HCT116 (cell line): ENCODE measurements at regions of chr17 and their contacts with region 1.

Region 1: DNA sequence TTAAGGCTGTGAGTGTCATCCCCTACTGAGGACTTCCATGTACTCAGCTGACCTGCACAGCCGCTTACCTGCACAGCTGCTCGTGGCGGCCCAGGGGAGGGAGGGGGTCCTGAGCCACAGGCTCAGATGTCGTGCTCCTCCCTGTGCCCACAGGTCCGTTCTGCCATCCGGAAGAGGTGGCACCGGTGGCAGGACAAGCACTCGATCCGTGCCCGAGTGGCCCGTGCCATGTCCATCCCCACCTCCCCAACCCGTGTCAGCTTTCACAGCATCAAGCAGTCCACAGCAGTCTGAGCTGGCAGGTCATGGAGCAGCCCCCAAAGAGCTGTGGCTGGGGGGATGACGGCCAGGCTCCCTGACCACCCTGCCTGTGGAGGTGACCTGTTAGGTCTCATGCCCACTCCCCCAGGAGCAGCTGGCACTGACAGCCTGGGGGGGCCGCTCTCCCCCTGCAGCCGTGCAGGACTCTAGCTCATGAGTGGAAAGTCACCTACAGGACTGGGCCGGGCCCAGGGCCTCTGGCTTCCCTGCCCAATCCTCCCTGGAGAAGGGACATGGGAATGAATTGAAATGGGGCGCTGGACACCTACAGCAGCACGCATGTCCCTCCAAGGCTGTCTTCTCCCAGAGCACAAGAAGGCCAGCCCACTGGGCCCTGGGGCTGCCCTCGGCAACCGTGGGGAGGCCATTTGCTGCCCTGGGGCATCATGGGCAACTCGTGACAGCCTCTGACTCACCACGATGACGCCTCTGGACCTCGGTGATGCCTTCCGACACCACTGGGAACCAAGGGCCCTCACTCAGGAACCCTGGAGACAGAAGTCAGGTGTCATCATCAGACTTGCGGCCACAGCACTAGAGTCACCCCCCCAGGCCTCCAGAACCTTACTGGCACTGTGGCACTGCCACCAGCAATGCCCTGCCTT is 9.9 kb upstream of the SPPL2C start:
- DNase-seq: no peak
- ATAC-seq: peak; percentile 25; the same call in 1 of the 2 replicates
- H3K4me3 ChIP-seq: no peak overlapping the region
- H3K27ac ChIP-seq: no peak overlapping the region
- H3K4me1 ChIP-seq: peaks cover 0 to 7% of the 10 kb centered on the region in 2 experiments; a peak in 2 of 4 replicates
- H3K27me3 ChIP-seq: no peaks in the 10 kb centered on the region; the same call in 1 of the 2 replicates
- CTCF ChIP-seq: no peak
- POLR2A ChIP-seq: no peak
- RAD21 ChIP-seq: no peak

Region 2: GRCh38 chr17:45640141-45640850 is 194.4 kb before region 1 on chr17:
- CTCF ChIA-PET with region 1: interaction called, 163 read pairs
- POLR2A ChIA-PET with region 1: interaction called, 8 read pairs
- RAD21 ChIA-PET with region 1: interaction called, 10 to 12 read pairs
- intact Hi-C with region 1: loop called (anchors 1 kb)
- DNase-seq: peak; percentile 78
- ATAC-seq: peak; percentile 97
- H3K4me3 ChIP-seq: no peak overlapping the region
- H3K27ac ChIP-seq: no peak overlapping the region
- H3K4me1 ChIP-seq: no peaks in the 10 kb centered on the region
- H3K27me3 ChIP-seq: no peaks in the 10 kb centered on the region
- CTCF ChIP-seq: peak; percentile 95 to 100 (median 100)
- POLR2A ChIP-seq: no peak
- RAD21 ChIP-seq: peak; percentile 99

Region 3: DNA sequence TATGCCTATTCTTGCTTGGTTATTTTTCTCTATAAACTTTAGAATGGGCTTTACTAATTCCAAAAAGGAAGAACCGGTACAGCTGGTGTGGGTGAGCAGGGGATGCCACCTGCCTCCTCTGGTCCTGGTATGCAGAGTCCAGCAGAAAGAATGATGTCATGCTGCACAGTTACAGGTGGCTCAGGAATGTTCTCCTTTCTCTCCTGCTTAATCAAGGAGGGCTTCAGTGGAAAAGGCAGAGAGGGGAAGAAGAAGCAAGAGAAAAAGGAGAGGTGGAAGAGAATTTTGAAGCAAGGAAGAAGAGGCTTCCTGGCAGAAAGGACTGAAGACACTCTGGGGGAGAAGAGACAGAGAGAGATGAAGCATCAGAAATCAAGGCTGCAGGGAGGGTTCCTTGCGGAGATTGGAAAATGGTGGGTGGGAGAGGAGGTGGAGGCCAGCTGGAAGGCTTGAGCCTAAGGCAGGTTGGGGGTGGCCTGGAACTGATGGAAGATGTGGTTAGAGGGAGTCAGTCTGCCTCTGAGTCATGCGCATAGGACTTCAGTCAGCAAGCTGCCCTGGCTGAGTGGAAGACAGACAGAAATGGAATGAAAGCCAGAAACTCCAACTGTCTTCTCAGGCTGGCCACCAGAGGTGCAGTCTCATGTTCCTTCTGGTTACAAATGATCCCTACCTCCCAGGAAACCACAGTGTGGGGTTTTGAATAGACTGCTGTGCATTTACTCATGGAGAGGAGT is 115.2 kb before region 1 on chr17:
- CTCF ChIA-PET with region 1: interaction called, 15 read pairs
- POLR2A ChIA-PET with region 1: interaction called, 3 read pairs
- RAD21 ChIA-PET with region 1: interaction called in 1 of 2 experiments, 3 read pairs
- intact Hi-C with region 1: loop called (anchors 5 kb)
- DNase-seq: peak; percentile 64
- ATAC-seq: peak; percentile 96
- H3K4me3 ChIP-seq: no peak overlapping the region
- H3K27ac ChIP-seq: no peak overlapping the region
- H3K4me1 ChIP-seq: peaks cover 10 to 11% of the 10 kb centered on the region in 2 experiments
- H3K27me3 ChIP-seq: no peaks in the 10 kb centered on the region
- CTCF ChIP-seq: peak; percentile 32 to 78 (median 73); a peak in 5 of 6 replicates
- POLR2A ChIP-seq: no peak
- RAD21 ChIP-seq: peak; percentile 54

Region 4: GRCh38 chr17:45759761-45760160 is 75.0 kb before region 1 on chr17:
- CTCF ChIA-PET with region 1: no interaction called
- POLR2A ChIA-PET with region 1: no interaction called
- RAD21 ChIA-PET with region 1: no interaction called
- intact Hi-C with region 1: no loop called
- DNase-seq: peak; percentile 52
- ATAC-seq: peak; percentile 92
- H3K4me3 ChIP-seq: no peak overlapping the region
- H3K27ac ChIP-seq: no peak overlapping the region
- H3K4me1 ChIP-seq: no peaks in the 10 kb centered on the region
- H3K27me3 ChIP-seq: peaks cover 4% of the 10 kb centered on the region; the same call in 1 of the 2 replicates
- CTCF ChIP-seq: no peak
- POLR2A ChIP-seq: no peak
- RAD21 ChIP-seq: no peak

Region 5: DNA sequence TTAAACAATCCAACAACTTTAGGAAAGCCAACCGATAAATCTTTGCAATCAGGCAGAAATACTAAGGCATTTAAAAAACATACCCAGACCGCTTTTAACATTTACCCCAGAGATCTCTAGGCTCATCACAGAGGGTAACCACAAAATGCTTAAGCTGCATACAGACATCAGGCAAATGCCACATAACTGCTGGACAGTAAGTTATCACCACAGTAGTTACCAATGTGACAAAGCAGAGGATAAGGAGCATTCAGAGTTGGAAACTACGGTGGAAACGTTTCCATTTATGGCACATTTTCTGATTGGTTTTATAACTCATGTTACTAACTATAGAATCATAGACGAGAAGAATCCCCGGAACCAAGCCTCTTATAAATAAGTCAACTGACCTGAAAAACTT is 281.0 kb after region 1 on chr17:
- CTCF ChIA-PET with region 1: no interaction called
- POLR2A ChIA-PET with region 1: no interaction called
- RAD21 ChIA-PET with region 1: no interaction called
- intact Hi-C with region 1: no loop called
- DNase-seq: no peak
- ATAC-seq: no peak
- H3K4me3 ChIP-seq: no peak overlapping the region
- H3K27ac ChIP-seq: no peak overlapping the region
- H3K4me1 ChIP-seq: no peaks in the 10 kb centered on the region
- H3K27me3 ChIP-seq: no peaks in the 10 kb centered on the region
- CTCF ChIP-seq: no peak
- POLR2A ChIP-seq: no peak
- RAD21 ChIP-seq: no peak